Heart right ventricle (tissue), 16 donors: ENCODE measurements at regions of chr3 and their contacts with region 1.

Region 1: GRCh38 chr3:12934431-12934830 is 93.1 kb upstream of the RPL32 start:
- DNase-seq: peak; percentile 82 to 84
- ATAC-seq: peak; percentile 34 to 69 (median 54)
- H3K4me3 ChIP-seq: peak overlapping the region in 1 of 10 donors; percentile 28
- H3K27ac ChIP-seq: peak overlapping the region in 9 of 10 donors; percentile 63 to 91 (median 86)
- H3K4me1 ChIP-seq: peaks cover 71 to 100% (median 87%) of the 10 kb centered on the region in 9 donors
- H3K27me3 ChIP-seq: no peaks in the 10 kb centered on the region
- CTCF ChIP-seq: no peak

Region 2: DNA sequence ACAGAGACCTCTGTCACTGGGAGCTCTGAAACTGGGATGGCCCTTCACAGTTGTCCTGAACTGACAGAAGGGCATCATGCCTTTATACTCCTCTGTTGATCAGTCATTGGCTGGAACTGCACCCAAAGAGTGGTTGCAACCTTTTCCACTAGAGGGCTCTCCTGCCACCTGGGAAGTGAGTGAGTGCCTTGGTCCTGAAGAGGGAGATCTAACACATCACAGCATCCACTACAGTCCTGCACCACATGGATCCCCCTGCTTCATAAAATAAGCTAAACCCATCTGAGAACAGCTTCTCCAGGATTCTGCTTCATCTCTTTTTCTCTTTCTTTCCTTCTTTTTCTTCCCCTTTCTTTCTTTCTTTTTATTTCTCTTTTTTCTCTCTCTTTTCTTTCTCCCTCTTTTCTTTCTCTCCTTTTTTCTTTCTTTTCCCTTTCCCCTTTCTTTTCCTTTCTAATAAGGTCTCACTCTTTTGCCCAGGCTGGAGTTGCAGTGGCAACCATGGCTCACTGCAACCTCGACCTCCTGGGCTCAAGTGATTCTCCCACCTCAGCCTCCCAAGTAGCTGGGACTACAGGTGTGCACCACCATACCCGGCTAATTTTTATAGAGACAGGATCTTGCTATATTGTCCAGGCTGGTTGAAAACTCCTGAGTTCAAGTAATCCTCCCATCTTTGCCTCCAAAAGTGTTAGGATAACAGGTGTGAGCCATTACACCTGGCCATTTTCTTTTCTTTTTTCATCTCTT is 227.8 kb before region 1 on chr3:
- intact Hi-C with region 1: no loop called
- DNase-seq: peak in 1 of 2 donors; percentile 52
- ATAC-seq: peak; percentile 77 to 89 (median 84)
- H3K4me3 ChIP-seq: no peak overlapping the region
- H3K27ac ChIP-seq: no peak overlapping the region
- H3K4me1 ChIP-seq: peaks cover 0 to 22% (median 12%) of the 10 kb centered on the region in 9 donors
- H3K27me3 ChIP-seq: no peaks in the 10 kb centered on the region
- CTCF ChIP-seq: peak; percentile 28 to 81 (median 69)

Region 3: GRCh38 chr3:12967606-12968351 is 33.3 kb after region 1 on chr3:
- intact Hi-C with region 1: loop called in 5 of 10 experiments (anchors 5 kb)
- DNase-seq: peak; percentile 90 to 94
- ATAC-seq: peak; percentile 88 to 93 (median 91)
- H3K4me3 ChIP-seq: peak overlapping the region; percentile 63 to 96 (median 87)
- H3K27ac ChIP-seq: peak overlapping the region; percentile 24 to 93 (median 86)
- H3K4me1 ChIP-seq: peaks cover 35 to 84% (median 73%) of the 10 kb centered on the region in 9 donors
- H3K27me3 ChIP-seq: no peaks in the 10 kb centered on the region
- CTCF ChIP-seq: no peak